ENCODE measurements at regions of chr11 and their contacts with region 1.

Region 1: GRCh38 chr11:16958833-16959232 is 55.4 kb downstream of the PLEKHA7 start:
- DNase-seq: no peak
- H3K4me3 ChIP-seq: no peak overlapping the region
- H3K27ac ChIP-seq: no peak overlapping the region
- H3K4me1 ChIP-seq: no peaks in the 10 kb centered on the region
- H3K27me3 ChIP-seq: no peaks in the 10 kb centered on the region
- CTCF ChIP-seq: no peak
- POLR2A ChIP-seq: no peak

Region 2: GRCh38 chr11:16469968-16470367 is 488.9 kb before region 1 on chr11:
- intact Hi-C with region 1: no loop called
- DNase-seq: no peak
- H3K4me3 ChIP-seq: no peak overlapping the region
- H3K27ac ChIP-seq: no peak overlapping the region
- H3K4me1 ChIP-seq: no peaks in the 10 kb centered on the region
- H3K27me3 ChIP-seq: no peaks in the 10 kb centered on the region
- CTCF ChIP-seq: no peak
- POLR2A ChIP-seq: no peak

Region 3: DNA sequence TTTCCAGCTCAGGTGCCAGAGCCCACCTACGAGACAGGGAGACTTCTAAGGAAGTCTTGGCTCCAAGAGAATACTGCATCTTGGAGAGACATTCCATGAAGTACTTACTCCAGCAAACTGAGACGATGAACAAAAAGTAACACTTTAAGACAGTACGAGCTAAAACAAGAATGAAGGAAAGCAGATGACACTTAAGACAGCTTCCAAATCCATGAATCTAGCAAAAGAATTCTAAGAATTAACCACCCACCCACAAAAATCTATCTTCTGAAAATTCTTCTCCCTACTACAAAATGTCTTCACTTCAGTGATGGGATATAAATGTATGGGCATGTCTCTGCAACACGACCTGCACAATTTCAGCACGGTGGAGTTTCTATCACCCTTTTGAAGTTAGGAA is 87.5 kb before region 1 on chr11:
- intact Hi-C with region 1: no loop called
- DNase-seq: no peak
- H3K4me3 ChIP-seq: no peak overlapping the region
- H3K27ac ChIP-seq: no peak overlapping the region
- H3K4me1 ChIP-seq: no peaks in the 10 kb centered on the region
- H3K27me3 ChIP-seq: no peaks in the 10 kb centered on the region
- CTCF ChIP-seq: no peak
- POLR2A ChIP-seq: no peak

Region 4: DNA sequence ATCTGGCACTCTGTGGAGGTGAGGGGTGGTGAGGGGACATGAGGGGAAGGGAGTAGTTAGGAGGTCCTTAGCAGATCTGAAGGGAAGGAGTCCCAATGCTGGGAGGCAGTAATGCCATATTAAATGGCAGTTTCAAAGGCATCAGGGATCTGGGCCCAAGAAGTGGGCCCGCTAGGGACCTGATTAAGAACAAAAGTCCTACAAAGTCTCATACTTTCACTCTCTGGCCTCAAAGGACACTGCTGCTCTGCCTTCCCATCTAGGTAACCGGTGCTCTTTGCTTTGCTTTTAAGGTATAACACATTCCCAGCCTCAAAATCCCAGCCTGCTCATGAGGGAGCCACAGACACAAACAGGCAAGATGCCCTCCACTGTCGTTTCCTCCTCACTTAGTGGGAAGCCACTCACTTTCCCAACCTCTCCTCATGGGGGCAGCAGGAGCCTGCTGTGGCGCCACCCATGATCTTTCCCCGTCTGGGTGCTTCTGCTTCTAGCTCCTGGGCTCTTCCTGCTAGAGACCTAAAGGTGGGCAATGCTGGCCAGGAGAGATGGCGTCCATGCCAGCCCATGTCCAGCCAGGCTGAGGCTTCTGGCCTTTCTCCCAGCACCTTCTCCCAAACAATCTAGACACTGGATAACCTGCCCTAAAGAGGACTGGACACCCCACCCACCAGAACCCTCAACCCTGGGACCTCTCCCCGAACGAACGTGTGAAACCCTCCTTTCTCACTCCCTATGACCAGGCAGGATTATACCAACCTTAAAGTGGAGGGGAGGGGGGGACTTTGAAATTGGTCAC is 13.0 kb before region 1 on chr11:
- intact Hi-C with region 1: loop called (anchors 1 kb)
- DNase-seq: peak; percentile 62
- H3K4me3 ChIP-seq: no peak overlapping the region
- H3K27ac ChIP-seq: no peak overlapping the region
- H3K4me1 ChIP-seq: no peaks in the 10 kb centered on the region
- H3K27me3 ChIP-seq: no peaks in the 10 kb centered on the region
- CTCF ChIP-seq: peak; percentile 11 to 82 (median 54)
- POLR2A ChIP-seq: no peak